Posterior cingulate gyrus (tissue), 11 donors: ENCODE measurements at regions of chr5 and their contacts with region 1.

Region 1: DNA sequence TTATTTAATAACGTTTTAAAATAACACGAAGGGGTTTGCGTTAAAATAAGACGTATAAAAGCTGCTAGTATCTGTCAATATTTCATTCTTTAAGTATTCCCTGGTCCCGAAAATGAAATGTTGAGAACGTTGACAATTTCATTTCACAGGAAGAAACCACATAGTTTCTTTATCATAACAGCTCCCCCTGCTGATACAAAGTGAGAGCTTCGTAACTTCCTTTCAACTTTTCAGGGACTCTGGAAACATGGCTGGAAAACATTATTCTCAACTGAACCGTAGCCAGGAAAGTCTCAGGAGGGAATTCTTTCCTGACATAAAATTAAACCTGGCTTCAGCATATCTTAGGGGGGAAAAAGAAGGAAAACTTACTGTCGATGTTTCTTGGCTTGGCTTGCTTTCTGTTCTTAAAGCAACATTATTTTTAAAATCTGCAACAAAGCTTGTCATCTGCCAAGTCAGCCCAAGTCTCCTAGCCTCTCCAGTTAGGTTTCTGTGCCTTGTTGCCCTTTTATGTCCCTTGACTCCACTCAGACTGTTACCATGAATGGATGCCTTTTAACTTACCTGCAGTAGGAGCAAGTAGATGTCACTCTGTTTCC is 122.9 kb upstream of the DAB2 start:
- DNase-seq: no peak

Region 2: DNA sequence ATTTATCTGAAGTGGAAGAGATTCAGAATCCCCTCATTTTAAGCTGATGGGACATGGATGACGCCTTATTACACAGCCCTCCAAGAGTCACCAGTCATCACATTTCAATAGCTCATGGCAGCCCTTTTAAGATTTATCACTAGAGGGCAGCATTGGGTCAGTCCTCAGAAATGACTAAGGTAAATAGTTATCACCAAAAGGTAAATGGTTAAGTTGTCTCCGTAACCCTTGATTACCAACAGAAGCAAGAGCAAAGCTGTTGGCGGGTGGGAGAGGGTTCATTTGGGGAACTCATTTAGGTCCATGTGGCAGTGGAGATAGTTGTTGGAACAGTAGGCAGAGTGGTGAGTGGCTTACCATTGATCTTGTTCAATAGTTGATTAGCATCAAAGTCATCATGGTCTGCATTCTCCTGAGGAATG is 171.3 kb before region 1 on chr5:
- intact Hi-C with region 1: loop called (anchors 1 kb)
- DNase-seq: no peak

Region 3: GRCh38 chr5:39424736-39425637 is 122.7 kb before region 1 on chr5 and contains the start of gene DAB2:
- intact Hi-C with region 1: loop called (anchors 5 kb)
- DNase-seq: peak; percentile 32 to 92 (median 56)